Psoas muscle (tissue), 8 donors: ENCODE measurements at regions of chr2 and their contacts with region 1.

Region 1: GRCh38 chr2:64330281-64331113 is 123.5 kb upstream of the LGALSL start:
- DNase-seq: peak; percentile 71 to 85
- ATAC-seq: peak; percentile 62 to 85 (median 71)
- H3K4me3 ChIP-seq: peak overlapping the region; percentile 38
- H3K27ac ChIP-seq: peak overlapping the region; percentile 51
- H3K4me1 ChIP-seq: peaks cover 42% of the 10 kb centered on the region
- H3K27me3 ChIP-seq: no peaks in the 10 kb centered on the region
- CTCF ChIP-seq: peak; percentile 95

Region 2: DNA sequence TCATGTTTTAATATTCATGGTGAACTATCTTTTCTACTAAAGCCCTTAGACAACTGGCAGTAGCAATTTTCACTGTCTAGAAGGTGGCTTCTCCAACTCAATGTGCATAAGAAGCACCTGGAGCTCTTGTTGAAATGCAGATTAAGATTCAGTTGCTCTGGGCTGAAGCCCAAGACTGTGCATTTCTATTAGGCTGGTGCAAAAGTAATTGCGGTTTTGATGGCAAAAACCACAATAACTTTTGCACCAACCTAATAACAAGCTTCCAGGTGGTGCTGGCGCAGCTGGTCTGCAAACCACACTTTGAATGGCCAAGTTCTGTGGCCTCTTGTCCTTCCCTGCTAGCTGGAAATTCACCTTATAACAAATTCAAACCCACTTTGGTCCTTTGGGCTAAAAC is 284.6 kb before region 1 on chr2:
- intact Hi-C with region 1: loop called (anchors 1 to 5 kb)
- DNase-seq: no peak
- ATAC-seq: no peak
- H3K4me3 ChIP-seq: no peak overlapping the region
- H3K27ac ChIP-seq: no peak overlapping the region
- H3K4me1 ChIP-seq: no peaks in the 10 kb centered on the region
- H3K27me3 ChIP-seq: no peaks in the 10 kb centered on the region
- CTCF ChIP-seq: no peak

Region 3: DNA sequence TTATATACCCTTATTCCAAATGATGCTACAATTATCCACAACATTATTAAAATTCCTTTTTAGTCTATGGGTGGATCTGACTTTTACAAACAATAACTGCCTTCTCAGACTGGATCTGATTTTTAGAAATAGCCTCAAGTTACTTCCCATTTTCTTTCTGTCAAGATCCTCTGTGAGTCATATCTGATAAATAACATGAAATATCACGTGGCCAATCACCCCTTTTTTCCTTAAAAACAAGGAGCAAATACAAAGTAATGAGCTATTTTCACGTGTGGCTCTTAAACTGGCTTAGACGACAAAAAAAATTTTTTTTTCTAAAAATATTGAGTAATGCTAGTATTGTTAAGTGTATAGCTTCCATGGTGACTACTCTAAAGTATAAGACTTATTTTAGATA is 192.9 kb before region 1 on chr2:
- intact Hi-C with region 1: loop called in 1 of 2 experiments (anchors 5 kb)
- DNase-seq: no peak
- ATAC-seq: no peak
- H3K4me3 ChIP-seq: no peak overlapping the region
- H3K27ac ChIP-seq: no peak overlapping the region
- H3K4me1 ChIP-seq: peaks cover 4% of the 10 kb centered on the region
- H3K27me3 ChIP-seq: no peaks in the 10 kb centered on the region
- CTCF ChIP-seq: no peak

Region 4: DNA sequence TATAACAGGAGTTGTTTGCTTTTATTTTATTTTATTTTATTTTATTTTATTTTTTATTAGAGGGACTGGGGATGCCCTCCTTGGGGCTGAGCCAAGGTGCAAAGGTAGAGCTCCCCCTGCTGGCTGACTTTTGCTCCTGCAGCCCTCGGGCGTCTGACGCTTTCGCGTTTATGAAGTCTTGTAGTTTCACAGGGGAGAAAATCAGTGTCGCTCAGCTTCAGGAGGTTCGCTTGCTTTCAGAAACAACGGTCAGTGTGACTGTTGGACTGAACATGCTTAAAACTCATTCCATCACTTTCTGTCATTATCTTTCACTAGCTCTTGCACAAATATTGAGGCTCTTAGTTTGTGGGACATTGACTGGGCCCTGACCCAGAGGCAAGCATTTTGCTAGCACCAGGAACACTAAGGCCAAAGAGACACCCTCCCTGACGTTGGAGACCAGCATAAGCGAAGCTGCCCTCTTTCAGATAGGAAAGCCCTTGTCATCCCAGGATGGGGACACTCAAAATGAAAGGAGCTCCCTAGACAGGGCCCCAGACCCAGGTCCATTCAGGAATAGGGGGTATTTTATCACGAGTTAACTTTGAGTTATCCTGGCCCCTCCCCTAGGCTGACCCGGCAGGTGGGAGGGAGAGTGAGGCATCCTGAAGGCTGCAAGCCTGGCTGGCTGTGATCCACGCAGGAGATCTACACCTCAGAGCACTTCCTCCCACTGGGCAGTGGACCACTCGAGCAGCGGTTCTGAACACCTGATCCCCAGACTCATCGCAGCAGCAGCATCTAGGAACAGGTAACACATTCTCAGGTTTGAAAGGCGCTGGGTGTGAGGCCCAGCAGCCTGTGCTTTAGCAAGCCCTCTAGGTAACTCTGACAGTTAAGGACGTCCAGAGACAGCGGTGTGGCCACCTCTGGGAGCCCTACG is 157.8 kb after region 1 on chr2:
- intact Hi-C with region 1: loop called (anchors 1 kb)
- DNase-seq: peak; percentile 44 to 79
- ATAC-seq: peak; percentile 75 to 92 (median 83)
- H3K4me3 ChIP-seq: no peak overlapping the region
- H3K27ac ChIP-seq: no peak overlapping the region
- H3K4me1 ChIP-seq: peaks cover 8% of the 10 kb centered on the region
- H3K27me3 ChIP-seq: no peaks in the 10 kb centered on the region
- CTCF ChIP-seq: peak; percentile 96

Region 5: GRCh38 chr2:64865073-64865830 is 534.8 kb after region 1 on chr2:
- intact Hi-C with region 1: loop called in 1 of 2 experiments (anchors 10 kb)
- DNase-seq: peak; percentile 67 to 79
- ATAC-seq: peak; percentile 89 to 92 (median 90)
- H3K4me3 ChIP-seq: peak overlapping the region; percentile 79
- H3K27ac ChIP-seq: peak overlapping the region; percentile 81
- H3K4me1 ChIP-seq: peaks cover 8% of the 10 kb centered on the region
- H3K27me3 ChIP-seq: no peaks in the 10 kb centered on the region
- CTCF ChIP-seq: peak; percentile 99